ENCODE measurements at regions of chr2 and their contacts with region 1.

Region 1: GRCh38 chr2:18178736-18179349 is 300.4 kb downstream of the KCNS3 start:
- DNase-seq: no peak
- H3K4me3 ChIP-seq: no peak overlapping the region
- H3K27ac ChIP-seq: no peak overlapping the region
- H3K4me1 ChIP-seq: no peaks in the 10 kb centered on the region
- H3K27me3 ChIP-seq: no peaks in the 10 kb centered on the region
- CTCF ChIP-seq: peak in 2 of 3 experiments; percentile 74 to 83

Region 2: DNA sequence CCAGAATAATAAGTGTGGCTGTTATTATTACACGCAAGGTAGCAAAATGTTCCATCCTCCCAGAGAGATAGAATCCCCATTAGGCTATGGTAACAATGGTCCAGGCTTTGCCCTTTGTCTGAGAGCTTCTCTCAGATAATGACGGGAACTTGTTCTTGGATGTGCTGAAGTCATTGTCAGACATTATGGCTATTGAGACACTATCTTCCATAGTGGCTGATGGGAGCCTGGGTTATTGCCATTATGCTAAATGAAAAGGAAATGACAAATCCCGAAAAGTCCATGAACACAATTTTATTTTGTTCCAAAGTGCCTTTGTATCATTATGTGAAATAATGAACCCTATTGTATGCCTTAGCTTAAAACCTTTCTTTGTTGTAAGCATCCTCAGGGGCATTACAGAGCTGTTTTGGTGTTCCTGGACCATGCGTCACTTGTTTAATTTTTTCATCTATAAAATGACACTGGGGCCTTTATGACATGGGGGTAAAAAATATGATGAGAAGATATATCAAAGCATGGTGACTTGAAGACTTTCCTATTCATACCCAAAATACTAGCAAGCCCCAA is 81.9 kb before region 1 on chr2:
- intact Hi-C with region 1: no loop called
- DNase-seq: no peak
- H3K4me3 ChIP-seq: no peak overlapping the region
- H3K27ac ChIP-seq: no peak overlapping the region
- H3K4me1 ChIP-seq: no peaks in the 10 kb centered on the region
- H3K27me3 ChIP-seq: no peaks in the 10 kb centered on the region
- CTCF ChIP-seq: no peak

Region 3: GRCh38 chr2:18378020-18378653 is 199.3 kb after region 1 on chr2:
- intact Hi-C with region 1: loop called (anchors 10 kb)
- DNase-seq: no peak
- H3K4me3 ChIP-seq: no peak overlapping the region
- H3K27ac ChIP-seq: no peak overlapping the region
- H3K4me1 ChIP-seq: no peaks in the 10 kb centered on the region
- H3K27me3 ChIP-seq: no peaks in the 10 kb centered on the region
- CTCF ChIP-seq: peak; percentile 58 to 84 (median 79)

Region 4: GRCh38 chr2:18455236-18455862 is 276.5 kb after region 1 on chr2:
- intact Hi-C with region 1: no loop called
- DNase-seq: peak in 1 of 2 donors; percentile 71
- H3K4me3 ChIP-seq: no peak overlapping the region
- H3K27ac ChIP-seq: peak overlapping the region; percentile 82 to 83
- H3K4me1 ChIP-seq: peaks cover 9 to 22% of the 10 kb centered on the region in 2 donors
- H3K27me3 ChIP-seq: no peaks in the 10 kb centered on the region
- CTCF ChIP-seq: peak in 2 of 3 experiments; percentile 43

Measured in ascending aorta (tissue), 2 donors.